ENCODE measurements at regions of chr3 and their contacts with region 1.

Region 1: GRCh38 chr3:141000027-141000663 is 51.0 kb upstream of the SPSB4 start:
- DNase-seq: peak; percentile 64
- H3K4me3 Mint-ChIP-seq: no peak overlapping the region
- H3K27ac Mint-ChIP-seq: no peak overlapping the region
- H3K4me1 Mint-ChIP-seq: peaks cover 5% of the 10 kb centered on the region
- H3K27me3 Mint-ChIP-seq: no peaks in the 10 kb centered on the region
- CTCF ChIP-seq: peak; percentile 55

Region 2: GRCh38 chr3:140292684-140293083 is 707.5 kb before region 1 on chr3:
- CTCF ChIA-PET with region 1: no interaction called
- POLR2A ChIA-PET with region 1: no interaction called
- intact Hi-C with region 1: no loop called
- DNase-seq: peak; percentile 77
- H3K4me3 Mint-ChIP-seq: no peak overlapping the region
- H3K27ac Mint-ChIP-seq: no peak overlapping the region
- H3K4me1 Mint-ChIP-seq: peaks cover 20% of the 10 kb centered on the region
- H3K27me3 Mint-ChIP-seq: no peaks in the 10 kb centered on the region
- CTCF ChIP-seq: no peak

Region 3: GRCh38 chr3:140898340-140899180 is 101.6 kb before region 1 on chr3:
- CTCF ChIA-PET with region 1: interaction called, 21 read pairs
- POLR2A ChIA-PET with region 1: no interaction called
- intact Hi-C with region 1: no loop called
- DNase-seq: peak; percentile 83
- H3K4me3 Mint-ChIP-seq: no peak overlapping the region
- H3K27ac Mint-ChIP-seq: no peak overlapping the region
- H3K4me1 Mint-ChIP-seq: peaks cover 10% of the 10 kb centered on the region
- H3K27me3 Mint-ChIP-seq: peaks cover 30% of the 10 kb centered on the region
- CTCF ChIP-seq: peak; percentile 61

Region 4: DNA sequence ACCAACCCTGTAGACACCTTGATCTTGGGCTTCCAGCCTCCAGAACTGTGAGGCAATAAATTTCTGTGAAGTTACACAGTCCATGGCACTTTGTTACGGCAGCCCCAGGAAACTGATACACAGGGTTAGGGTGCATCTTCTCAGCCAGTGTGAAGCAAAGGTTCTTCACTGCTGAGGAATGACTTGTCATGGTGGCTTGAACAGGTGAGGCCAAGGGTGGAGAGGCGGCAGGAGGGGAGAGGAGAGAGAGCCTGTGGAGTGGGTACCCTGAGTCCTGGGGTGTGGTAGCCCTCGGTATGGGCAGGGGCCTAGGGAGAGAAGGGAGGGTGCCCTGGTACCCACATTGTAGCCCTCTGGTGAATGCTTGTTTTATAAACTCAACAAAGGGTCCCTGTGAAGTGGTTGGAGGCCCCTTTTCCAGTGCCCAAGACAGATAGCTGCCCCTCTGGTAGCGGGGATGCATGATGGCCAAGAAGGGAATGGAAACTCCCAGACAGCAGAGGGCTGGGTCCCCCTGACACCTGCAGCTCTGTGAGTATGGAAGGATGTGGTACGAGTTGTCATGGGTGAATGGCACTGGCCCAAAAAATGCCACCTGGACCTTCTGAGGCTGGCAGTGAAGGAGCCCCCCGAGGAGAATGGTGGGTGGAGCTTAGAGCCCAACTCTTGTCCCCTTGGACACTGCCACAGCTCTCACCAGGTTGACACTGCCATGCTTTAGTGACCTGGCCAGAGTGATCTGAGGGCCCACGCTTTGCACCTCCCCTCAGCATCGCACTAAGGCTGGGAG is 100.6 kb after region 1 on chr3:
- CTCF ChIA-PET with region 1: interaction called, 77 read pairs
- POLR2A ChIA-PET with region 1: no interaction called
- intact Hi-C with region 1: loop called (anchors 1 kb)
- DNase-seq: no peak
- H3K4me3 Mint-ChIP-seq: no peak overlapping the region
- H3K27ac Mint-ChIP-seq: no peak overlapping the region
- H3K4me1 Mint-ChIP-seq: no peaks in the 10 kb centered on the region
- H3K27me3 Mint-ChIP-seq: no peaks in the 10 kb centered on the region
- CTCF ChIP-seq: no peak

Region 5: DNA sequence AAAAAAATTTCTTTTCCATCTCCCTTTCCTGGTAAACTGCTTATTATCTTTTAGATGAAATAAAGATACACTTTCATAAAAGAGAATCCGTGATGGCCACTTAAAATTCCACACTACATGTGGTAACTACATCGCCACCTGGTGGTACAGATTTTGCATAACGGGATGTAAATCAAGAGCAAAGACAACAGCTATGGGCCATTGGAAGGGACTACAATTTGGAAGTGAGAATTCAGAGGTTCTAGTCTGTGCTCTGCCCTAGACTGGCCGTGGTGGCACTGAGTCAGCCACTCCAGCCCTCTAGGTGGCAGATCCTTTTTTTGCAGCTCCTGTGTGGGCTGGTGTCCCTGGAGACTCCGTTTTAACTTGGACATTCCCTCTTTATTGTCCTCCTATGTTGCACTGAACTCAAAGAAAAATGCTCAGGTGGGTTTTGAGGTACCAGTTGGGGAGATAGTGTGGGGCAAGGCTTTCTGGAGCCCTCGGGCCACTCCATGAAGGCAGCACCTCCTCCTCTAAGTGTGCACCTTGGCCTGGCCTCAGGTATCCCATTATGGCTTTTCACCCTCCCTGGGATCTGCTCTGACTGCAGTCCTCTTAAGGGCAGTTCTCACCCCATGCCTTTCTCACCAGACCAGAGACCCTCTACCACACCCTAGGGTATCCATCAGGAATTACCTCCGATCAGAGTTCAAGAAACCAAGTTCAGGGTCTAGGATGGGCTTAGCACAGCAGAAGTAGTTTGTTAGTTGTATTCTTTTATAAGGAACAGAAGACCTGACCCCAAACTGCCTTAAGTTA is 105.9 kb after region 1 on chr3:
- CTCF ChIA-PET with region 1: interaction called, 77 read pairs
- POLR2A ChIA-PET with region 1: no interaction called
- intact Hi-C with region 1: loop called (anchors 1 kb)
- DNase-seq: peak; percentile 81
- H3K4me3 Mint-ChIP-seq: no peak overlapping the region
- H3K27ac Mint-ChIP-seq: no peak overlapping the region
- H3K4me1 Mint-ChIP-seq: no peaks in the 10 kb centered on the region
- H3K27me3 Mint-ChIP-seq: no peaks in the 10 kb centered on the region
- CTCF ChIP-seq: peak; percentile 65

Region 6: DNA sequence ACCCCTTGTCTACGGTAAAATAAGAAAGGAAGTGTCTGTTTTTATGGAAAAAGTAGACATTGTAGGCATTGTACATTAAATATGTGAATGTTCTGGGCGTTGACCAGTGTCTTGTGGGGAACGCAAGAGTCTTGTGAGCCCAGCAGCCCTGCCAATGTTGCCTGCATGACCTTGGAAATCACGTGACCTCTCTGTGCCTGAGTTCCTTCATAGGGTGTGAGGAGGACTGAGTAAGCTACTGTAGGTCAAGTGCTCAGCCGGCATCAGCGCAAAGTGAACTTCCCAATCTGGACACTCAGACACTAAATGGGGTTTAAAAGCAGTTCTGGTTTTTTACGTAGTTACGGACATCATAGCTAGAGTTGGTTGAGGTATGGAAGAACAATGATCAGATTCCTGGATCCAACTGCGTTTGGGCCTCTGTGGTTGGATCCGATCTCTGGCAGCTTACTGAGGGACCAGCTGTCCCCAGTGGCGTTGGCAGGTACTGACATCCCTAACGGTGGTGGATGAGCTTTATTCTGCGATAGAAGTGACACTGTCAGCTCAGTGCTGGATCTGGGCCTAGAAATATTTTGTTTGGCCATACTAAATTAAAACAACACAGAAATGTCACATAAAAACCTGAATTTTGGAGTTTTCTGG is 114.8 kb after region 1 on chr3:
- CTCF ChIA-PET with region 1: interaction called, 15 read pairs
- POLR2A ChIA-PET with region 1: no interaction called
- intact Hi-C with region 1: no loop called
- DNase-seq: no peak
- H3K4me3 Mint-ChIP-seq: no peak overlapping the region
- H3K27ac Mint-ChIP-seq: no peak overlapping the region
- H3K4me1 Mint-ChIP-seq: no peaks in the 10 kb centered on the region
- H3K27me3 Mint-ChIP-seq: peaks cover 6% of the 10 kb centered on the region
- CTCF ChIP-seq: peak; percentile 26

Region 7: GRCh38 chr3:141184430-141184829 is 184.3 kb after region 1 on chr3:
- CTCF ChIA-PET with region 1: interaction called, 22 read pairs
- POLR2A ChIA-PET with region 1: interaction called, 3 read pairs
- intact Hi-C with region 1: no loop called
- DNase-seq: peak; percentile 5
- H3K4me3 Mint-ChIP-seq: no peak overlapping the region
- H3K27ac Mint-ChIP-seq: no peak overlapping the region
- H3K4me1 Mint-ChIP-seq: no peaks in the 10 kb centered on the region
- H3K27me3 Mint-ChIP-seq: no peaks in the 10 kb centered on the region
- CTCF ChIP-seq: no peak

Region 8: DNA sequence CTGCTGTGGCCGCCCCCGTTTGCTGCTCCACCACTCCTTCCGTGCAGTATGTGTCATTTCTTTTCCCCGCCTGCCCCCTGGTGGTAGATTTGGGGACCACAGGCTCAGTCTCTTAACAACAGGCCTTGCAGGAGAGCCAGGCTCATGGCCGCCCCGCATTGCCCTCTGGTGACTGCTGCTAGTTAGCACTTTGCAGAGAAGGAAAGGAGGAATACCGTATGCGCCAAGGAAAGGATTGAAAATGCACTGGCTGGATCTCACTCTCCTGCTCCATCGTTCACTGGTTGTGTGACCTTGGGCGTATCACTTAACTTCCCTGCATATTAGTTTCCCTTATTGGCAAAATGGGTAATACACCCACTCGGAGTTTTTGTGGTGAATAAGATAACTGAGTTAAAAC is 192.2 kb after region 1 on chr3:
- CTCF ChIA-PET with region 1: interaction called, 129 read pairs
- POLR2A ChIA-PET with region 1: interaction called, 3 read pairs
- intact Hi-C with region 1: loop called (anchors 1 kb)
- DNase-seq: peak; percentile 96
- H3K4me3 Mint-ChIP-seq: no peak overlapping the region
- H3K27ac Mint-ChIP-seq: no peak overlapping the region
- H3K4me1 Mint-ChIP-seq: peaks cover 8% of the 10 kb centered on the region
- H3K27me3 Mint-ChIP-seq: peaks cover 28% of the 10 kb centered on the region
- CTCF ChIP-seq: peak; percentile 96